Esophagus muscularis mucosa (tissue), 4 donors: ENCODE measurements at regions of chr1 and their contacts with region 1.

Region 1: GRCh38 chr1:44819608-44820327 is 11.4 kb downstream of the BTBD19 start:
- DNase-seq: no peak
- H3K4me3 ChIP-seq: peak overlapping the region; percentile 59 to 72 (median 62)
- H3K27ac ChIP-seq: peak overlapping the region; percentile 89 to 96 (median 92)
- H3K4me1 ChIP-seq: peaks cover 18 to 30% (median 26%) of the 10 kb centered on the region in 4 donors
- H3K27me3 ChIP-seq: no peaks in the 10 kb centered on the region
- CTCF ChIP-seq: peak in 2 of 3 experiments; percentile 5 to 48
- EP300 ChIP-seq: no peak
- POLR2A ChIP-seq: peak; percentile 96

Region 2: GRCh38 chr1:44523593-44524591 is 295.9 kb before region 1 on chr1:
- intact Hi-C with region 1: no loop called
- DNase-seq: no peak
- H3K4me3 ChIP-seq: peak overlapping the region in 1 of 4 donors; percentile 22
- H3K27ac ChIP-seq: no peak overlapping the region
- H3K4me1 ChIP-seq: no peaks in the 10 kb centered on the region
- H3K27me3 ChIP-seq: peaks cover 0 to 16% (median 0%) of the 10 kb centered on the region in 4 donors
- CTCF ChIP-seq: no peak
- EP300 ChIP-seq: no peak
- POLR2A ChIP-seq: no peak

Region 3: DNA sequence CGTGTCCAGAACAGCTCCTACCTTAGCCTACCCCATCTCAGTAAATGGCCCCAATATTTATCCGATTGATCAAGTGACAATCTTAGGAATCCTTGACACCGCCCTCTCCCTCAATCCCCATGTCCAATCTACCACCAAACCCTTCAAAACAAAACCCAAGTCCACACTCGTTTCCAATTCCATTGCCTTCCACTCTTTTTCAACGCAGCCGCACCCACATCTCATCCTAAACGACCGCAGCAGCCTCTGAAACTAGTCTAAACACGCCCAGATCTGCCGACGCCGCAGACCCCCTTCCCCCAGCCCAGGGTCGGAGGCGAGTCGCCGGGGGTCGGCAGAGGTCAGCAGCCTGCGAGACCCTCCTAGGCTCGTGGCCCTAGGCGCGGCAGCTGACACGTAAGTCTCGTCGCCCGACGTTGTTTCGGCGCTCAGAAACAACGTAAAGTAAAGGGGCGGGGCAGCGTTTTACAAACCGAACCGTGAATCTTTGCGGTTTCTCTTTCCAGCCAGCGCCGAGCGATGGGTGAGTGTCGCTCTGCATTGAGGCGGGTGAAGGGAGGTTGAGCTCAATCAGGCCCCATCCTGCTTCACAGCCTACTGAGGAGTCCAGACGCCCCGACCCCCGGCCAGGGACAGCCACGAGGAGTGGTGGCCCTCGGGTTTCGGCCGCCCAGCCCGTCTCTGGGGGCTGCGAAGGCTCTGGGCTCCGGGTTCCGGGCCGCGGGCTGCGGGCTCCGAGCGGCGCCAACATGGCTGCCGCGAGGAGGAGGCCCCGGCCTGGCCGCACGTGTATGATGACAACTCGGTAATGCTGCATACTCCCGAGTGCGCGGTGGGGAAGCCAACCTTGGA is 44.5 kb before region 1 on chr1 and contains the start of gene RPS8:
- intact Hi-C with region 1: no loop called
- DNase-seq: peak; percentile 98
- H3K4me3 ChIP-seq: peak within 1 kb of the TSS; percentile 62 to 83 (median 79)
- H3K27ac ChIP-seq: peak within 1 kb of the TSS; percentile 91 to 97 (median 96)
- H3K4me1 ChIP-seq: peaks cover 20 to 38% (median 33%) of the 10 kb centered on the region in 4 donors
- H3K27me3 ChIP-seq: no peaks in the 10 kb centered on the region
- CTCF ChIP-seq: no peak
- EP300 ChIP-seq: no peak
- POLR2A ChIP-seq: peak; percentile 97
- total RNA-seq, gene RPS8: 1,063 to 2,408 (median 1,844) TPM

Region 4: DNA sequence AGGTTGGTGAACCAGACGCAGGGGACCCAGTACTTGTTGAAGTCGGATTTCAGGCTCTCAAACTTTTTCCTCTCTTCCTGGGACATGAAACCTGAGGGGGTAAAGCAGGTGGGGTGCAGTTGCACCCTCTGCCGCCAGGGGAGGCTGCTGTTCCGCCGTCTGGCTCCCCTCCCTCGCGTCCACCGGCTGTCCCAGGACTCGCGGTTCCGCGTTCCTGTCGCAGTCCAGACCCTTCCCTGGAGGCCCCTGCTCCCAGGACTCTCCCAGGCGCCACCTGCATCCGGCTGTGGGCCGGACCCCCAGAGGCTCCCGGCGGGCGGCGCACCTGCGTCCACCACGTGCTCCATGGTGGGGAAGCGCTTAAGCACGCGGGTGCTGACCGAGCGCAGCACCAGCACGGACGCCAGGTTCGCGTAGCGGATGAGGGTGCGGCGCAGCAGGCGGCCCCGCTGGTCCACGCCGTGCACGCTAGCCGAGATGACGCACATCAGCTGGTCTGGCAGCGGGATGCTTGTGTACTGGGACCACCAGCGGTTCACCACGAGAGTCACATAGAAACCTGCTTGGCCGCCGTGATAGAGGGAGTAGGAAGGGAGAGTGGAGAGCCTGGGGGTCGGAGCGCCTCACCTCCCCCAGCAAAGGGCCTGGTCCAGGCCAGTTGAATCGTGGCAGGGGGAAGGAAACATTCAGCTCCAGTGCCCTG is 33.5 kb before region 1 on chr1:
- intact Hi-C with region 1: loop called (anchors 5 kb)
- DNase-seq: no peak
- H3K4me3 ChIP-seq: peak overlapping the region; percentile 48 to 71 (median 58)
- H3K27ac ChIP-seq: peak overlapping the region; percentile 55 to 70 (median 64)
- H3K4me1 ChIP-seq: peaks cover 33 to 40% (median 36%) of the 10 kb centered on the region in 4 donors
- H3K27me3 ChIP-seq: no peaks in the 10 kb centered on the region
- CTCF ChIP-seq: peak; percentile 97 to 100 (median 99)
- EP300 ChIP-seq: no peak
- POLR2A ChIP-seq: no peak